ENCODE measurements at regions of chr19 and their contacts with region 1.

Region 1: GRCh38 chr19:41563854-41564514 is 12.0 kb upstream of the CEACAM21 start:
- DNase-seq: peak; percentile 21
- H3K4me3 ChIP-seq: no peak overlapping the region
- H3K27ac ChIP-seq: no peak overlapping the region
- H3K4me1 ChIP-seq: no peaks in the 10 kb centered on the region
- H3K27me3 ChIP-seq: peaks cover 15% of the 10 kb centered on the region
- CTCF ChIP-seq: no peak

Region 2: GRCh38 chr19:41192574-41193429 is 371.2 kb before region 1 on chr19 and contains the start of gene CYP2S1:
- CTCF ChIA-PET with region 1: no interaction called
- dilution Hi-C with region 1: no loop called
- in situ Hi-C with region 1: no loop called
- intact Hi-C with region 1: loop called (anchors 10 kb)
- DNase-seq: peak; percentile 28
- H3K4me3 ChIP-seq: peak within 1 kb of the TSS; percentile 35 to 52 (median 48)
- H3K27ac ChIP-seq: no peak within 1 kb of the TSS
- H3K4me1 ChIP-seq: peaks cover 16% of the 10 kb centered on the region
- H3K27me3 ChIP-seq: peaks cover 3% of the 10 kb centered on the region
- CTCF ChIP-seq: no peak
- total RNA-seq, gene CYP2S1: 0.50 to 7.1 TPM

Region 3: DNA sequence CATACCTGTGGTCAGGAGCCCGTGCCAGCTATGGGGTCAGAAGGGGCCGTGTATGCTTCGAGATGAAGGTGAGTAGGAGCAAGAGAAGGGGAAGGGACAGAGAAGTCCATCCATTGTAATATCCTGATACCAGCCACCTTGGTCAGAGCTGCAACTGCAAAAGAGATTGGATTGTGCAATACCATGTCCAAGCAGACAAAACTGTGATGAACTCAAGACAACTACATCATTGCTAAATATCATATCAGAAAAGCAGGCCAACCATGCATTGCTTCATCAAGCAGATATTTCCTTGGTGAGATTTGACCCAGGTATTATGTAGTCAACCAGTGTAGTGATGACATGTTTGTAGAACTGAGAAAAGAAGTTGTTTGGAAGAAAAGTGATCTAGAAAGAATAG is 287.8 kb before region 1 on chr19:
- CTCF ChIA-PET with region 1: no interaction called
- dilution Hi-C with region 1: no loop called
- in situ Hi-C with region 1: no loop called
- intact Hi-C with region 1: no loop called
- DNase-seq: no peak
- H3K4me3 ChIP-seq: no peak overlapping the region
- H3K27ac ChIP-seq: no peak overlapping the region
- H3K4me1 ChIP-seq: no peaks in the 10 kb centered on the region
- H3K27me3 ChIP-seq: no peaks in the 10 kb centered on the region
- CTCF ChIP-seq: no peak

Region 4: GRCh38 chr19:41327576-41328156 is 236.3 kb before region 1 on chr19:
- CTCF ChIA-PET with region 1: no interaction called
- dilution Hi-C with region 1: no loop called
- in situ Hi-C with region 1: loop called in 1 of 2 experiments (anchors 25 kb)
- intact Hi-C with region 1: loop called (anchors 10 kb)
- DNase-seq: peak; percentile 88
- H3K4me3 ChIP-seq: peak overlapping the region in 1 of 3 experiments; percentile 27
- H3K27ac ChIP-seq: peak overlapping the region; percentile 29
- H3K4me1 ChIP-seq: peaks cover 51% of the 10 kb centered on the region
- H3K27me3 ChIP-seq: no peaks in the 10 kb centered on the region
- CTCF ChIP-seq: no peak

Region 5: GRCh38 chr19:41363753-41364523 is 200.0 kb before region 1 on chr19 and contains the start of gene B9D2:
- CTCF ChIA-PET with region 1: no interaction called
- dilution Hi-C with region 1: no loop called
- in situ Hi-C with region 1: no loop called
- intact Hi-C with region 1: no loop called
- DNase-seq: peak; percentile 96
- H3K4me3 ChIP-seq: peak within 1 kb of the TSS; percentile 67 to 85 (median 71)
- H3K27ac ChIP-seq: peak within 1 kb of the TSS; percentile 96
- H3K4me1 ChIP-seq: peaks cover 22% of the 10 kb centered on the region
- H3K27me3 ChIP-seq: no peaks in the 10 kb centered on the region
- CTCF ChIP-seq: no peak
- total RNA-seq, gene B9D2: 3.0 to 3.6 TPM

Region 6: DNA sequence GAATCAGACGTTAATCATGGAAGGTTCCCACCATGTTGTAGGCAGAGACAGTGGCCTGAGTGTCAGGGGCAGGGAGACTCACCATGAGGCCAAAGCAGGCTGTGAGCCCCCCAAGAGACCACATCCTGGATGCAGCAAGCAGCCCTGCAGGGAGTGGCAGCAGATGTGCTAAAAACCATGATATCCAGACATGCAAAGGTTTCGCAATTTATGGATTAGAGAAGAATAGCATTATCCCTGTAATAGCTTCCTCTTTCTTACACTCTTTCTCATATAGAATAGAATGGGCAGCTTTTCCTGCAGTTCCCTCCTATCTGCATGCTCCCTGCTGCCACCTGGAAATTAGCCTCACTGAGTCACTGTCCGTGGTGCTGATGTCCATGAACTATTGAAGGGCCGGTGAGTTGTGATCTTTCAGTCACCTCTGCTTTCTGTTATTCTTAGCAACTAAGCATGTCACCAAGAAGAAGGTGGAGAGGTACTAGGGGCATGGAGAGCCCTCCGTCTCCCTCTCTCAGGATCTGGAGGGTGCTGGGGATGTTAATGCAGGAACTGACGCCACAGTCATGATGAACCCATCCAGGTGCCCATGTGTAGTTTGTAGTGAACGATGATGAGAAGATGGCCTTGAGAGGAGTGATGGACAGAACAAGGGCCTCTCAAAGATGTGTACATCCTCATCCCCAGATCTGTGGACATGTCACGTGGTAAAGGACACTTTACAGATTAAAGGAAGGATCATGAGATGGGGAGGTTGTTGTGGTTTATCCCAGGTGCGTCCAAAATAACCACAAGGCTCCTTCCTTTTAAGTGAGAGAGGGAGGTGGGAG is 53.0 kb after region 1 on chr19:
- CTCF ChIA-PET with region 1: no interaction called
- dilution Hi-C with region 1: no loop called
- in situ Hi-C with region 1: no loop called
- intact Hi-C with region 1: no loop called
- DNase-seq: peak; percentile 25
- H3K4me3 ChIP-seq: no peak overlapping the region
- H3K27ac ChIP-seq: no peak overlapping the region
- H3K4me1 ChIP-seq: no peaks in the 10 kb centered on the region
- H3K27me3 ChIP-seq: no peaks in the 10 kb centered on the region
- CTCF ChIP-seq: peak in 1 of 2 donors; percentile 15